Aorta (tissue), 5 donors: ENCODE measurements at regions of chr2 and their contacts with region 1.

Region 1: DNA sequence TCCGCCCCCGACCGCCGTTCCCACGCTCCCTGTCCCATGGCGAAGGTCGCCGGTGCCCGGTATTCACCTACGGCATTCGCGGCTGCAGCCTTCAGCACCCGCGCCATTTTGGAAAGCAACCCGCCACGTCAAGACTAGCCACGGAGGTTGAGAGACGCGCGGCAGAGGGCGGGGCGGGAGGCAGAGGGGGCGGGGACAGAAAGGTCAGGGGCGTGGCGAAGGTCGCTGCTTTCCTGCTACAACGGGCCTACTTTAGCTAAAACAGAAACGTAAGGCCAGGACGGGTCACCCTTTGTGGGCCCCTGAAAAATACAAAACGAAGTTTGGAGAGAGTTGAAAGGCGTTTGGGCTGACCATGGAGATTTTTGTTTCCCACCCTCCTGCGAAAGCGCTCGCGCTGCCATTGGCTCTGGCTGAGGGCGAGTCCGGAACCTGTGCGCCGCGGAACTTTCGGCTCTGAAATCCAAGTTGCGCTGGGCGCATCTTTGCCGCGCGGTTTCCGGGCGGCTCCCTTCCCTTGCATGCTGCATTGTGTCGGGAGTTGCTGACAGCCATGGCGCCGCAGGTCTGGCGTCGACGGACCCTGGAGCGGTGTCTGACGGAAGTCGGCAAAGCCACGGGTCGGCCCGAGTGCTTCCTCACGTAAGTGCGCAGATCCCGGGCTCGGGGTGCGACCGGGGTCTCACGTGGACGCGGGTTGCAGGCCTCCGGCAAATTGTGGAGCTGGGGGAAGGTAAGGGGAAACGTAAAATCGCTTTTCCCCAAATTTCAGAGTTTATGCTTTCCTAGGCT is at the starts of genes MCEE and MPHOSPH10:
- DNase-seq: peak; percentile 95 to 96
- ATAC-seq: peak; percentile 99
- H3K4me3 ChIP-seq: peak within 1 kb of the TSS; percentile 65 to 95
- H3K27ac ChIP-seq: peak within 1 kb of the TSS; percentile 2 to 68
- H3K4me1 ChIP-seq: peaks cover 0 to 6% of the 10 kb centered on the region in 2 donors
- H3K27me3 ChIP-seq: no peaks in the 10 kb centered on the region
- total RNA-seq, gene MCEE: 16.4 to 25.6 TPM
- total RNA-seq, gene MPHOSPH10: 28.9 to 29.7 TPM

Region 2: DNA sequence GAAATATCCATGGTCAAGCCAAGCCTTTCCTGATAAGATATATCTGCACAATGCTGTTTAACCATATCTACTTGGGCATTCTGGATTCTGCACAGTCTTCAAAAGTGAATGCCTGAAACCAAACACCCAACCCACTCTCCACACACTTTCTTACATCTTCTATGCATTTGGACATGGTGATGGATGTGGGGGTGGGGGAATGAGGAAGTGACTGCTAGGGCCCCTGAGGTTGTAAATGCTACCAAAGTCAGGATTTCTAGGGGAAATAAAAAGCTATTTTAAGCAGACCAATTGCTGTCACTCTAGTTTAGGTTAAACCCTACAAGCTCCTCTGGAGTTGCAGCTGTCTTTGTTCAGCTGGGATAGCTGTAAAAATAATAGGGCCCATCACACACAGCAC is 550.0 kb before region 1 on chr2:
- intact Hi-C with region 1: no loop called
- DNase-seq: no peak
- ATAC-seq: no peak
- H3K4me3 ChIP-seq: no peak overlapping the region
- H3K27ac ChIP-seq: no peak overlapping the region
- H3K4me1 ChIP-seq: no peaks in the 10 kb centered on the region
- H3K27me3 ChIP-seq: peaks cover 0 to 2% of the 10 kb centered on the region in 2 donors

Region 3: DNA sequence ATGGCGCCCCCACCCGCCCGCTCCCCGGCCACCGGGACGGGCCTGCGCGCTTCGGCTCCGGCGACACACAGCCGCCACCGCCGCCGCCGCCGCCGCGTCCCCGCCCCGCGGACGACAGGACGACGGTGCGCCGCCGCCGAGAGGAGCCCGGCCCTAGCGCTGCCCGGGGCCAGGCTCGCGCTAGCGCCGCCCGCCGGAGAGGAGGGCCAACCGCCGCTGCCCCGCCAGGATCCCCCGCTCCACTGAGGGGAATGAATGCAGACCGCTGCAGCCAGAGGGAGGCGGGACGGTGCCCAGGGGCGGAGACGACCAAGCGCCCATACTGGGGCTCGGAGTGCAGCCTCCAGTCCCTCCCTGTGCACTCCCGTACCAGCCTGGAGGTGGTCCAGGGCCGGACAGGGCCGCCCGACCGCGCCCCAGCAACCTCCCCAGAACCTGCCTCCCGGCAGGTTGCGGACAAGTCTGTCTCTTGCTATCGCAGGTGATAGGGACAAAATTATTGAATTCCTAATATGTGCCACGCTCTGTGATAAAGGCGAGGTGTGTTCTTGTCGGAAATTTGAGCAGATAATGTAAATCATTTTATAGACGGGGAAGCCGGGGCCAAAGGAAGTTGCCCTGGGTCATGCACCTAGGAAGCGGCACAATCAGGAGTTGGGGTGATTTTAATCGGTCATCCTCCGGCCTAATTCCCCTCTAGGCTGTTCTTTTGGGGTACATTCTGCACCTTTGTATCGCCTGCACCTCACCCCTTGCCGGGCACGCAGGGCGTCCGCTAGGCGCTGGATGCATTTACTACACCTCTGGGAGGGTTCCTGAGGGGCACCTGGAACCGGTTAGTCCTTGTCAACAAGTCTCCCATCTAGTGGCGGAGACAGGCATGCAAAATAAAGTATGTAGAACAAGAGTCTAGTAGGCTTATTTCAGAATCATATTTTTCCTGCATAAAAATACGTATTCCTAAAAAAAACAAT is 135.3 kb before region 1 on chr2 and contains the start of gene TEX261:
- intact Hi-C with region 1: loop called in 1 of 2 experiments (anchors 10 kb)
- DNase-seq: peak; percentile 93 to 97
- ATAC-seq: peak; percentile 98
- H3K4me3 ChIP-seq: peak within 1 kb of the TSS; percentile 84 to 86
- H3K27ac ChIP-seq: peak within 1 kb of the TSS in 1 of 2 donors; percentile 2
- H3K4me1 ChIP-seq: peaks cover 0 to 2% of the 10 kb centered on the region in 2 donors
- H3K27me3 ChIP-seq: no peaks in the 10 kb centered on the region
- total RNA-seq, gene TEX261: 51.0 to 58.1 TPM

Region 4: GRCh38 chr2:71166812-71167211 is 36.5 kb after region 1 on chr2:
- intact Hi-C with region 1: no loop called
- DNase-seq: no peak
- ATAC-seq: no peak
- H3K4me3 ChIP-seq: no peak overlapping the region
- H3K27ac ChIP-seq: no peak overlapping the region
- H3K4me1 ChIP-seq: no peaks in the 10 kb centered on the region
- H3K27me3 ChIP-seq: no peaks in the 10 kb centered on the region